ENCODE measurements at regions of chr17 and their contacts with region 1.

Region 1: GRCh38 chr17:69523244-69523861 is 108.9 kb downstream of the MAP2K6 start:
- DNase-seq: peak in 24 of 42 donors; percentile 16 to 79 (median 50)

Region 2: DNA sequence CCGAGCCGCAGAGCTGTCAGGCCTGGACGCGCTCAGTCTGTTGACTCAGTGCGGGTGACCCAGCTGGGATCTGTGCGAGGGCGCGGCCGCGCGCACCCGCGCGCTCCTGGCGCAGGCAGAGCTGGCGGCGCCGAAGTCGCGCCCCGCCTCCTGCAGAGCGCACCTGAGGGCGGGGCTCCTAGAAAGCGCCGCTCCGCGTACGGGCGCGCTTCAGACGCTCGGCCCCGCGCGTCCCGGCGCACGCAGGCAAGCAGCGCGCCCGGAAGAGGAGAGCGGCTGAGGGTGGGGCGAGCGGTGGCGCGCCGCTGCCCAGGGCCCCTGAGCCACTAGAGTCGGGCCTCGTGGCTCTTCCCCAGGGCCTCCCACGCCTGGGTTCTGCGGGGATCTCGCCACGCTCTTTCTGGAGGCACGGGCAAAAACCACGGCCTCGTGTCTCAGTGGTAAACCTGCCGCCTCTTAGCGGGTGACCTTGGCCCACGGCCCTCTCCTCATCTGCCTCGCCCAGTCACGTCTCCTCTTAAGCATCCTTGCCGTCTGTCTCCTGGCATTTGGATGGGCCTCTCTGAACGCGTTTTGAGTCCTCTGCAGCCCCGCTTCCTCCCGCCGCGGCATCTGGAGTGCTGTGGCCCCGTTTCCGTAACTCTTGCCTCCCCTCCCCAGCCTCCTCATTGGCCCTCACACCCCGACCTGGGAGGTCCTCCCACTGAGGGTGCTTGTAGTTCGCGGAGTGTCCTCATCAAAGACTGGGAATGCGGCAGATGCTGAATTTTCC is 196.1 kb before region 1 on chr17 and contains the start of gene ABCA5:
- intact Hi-C with region 1: loop called (anchors 10 kb)
- DNase-seq: peak; percentile 53 to 94 (median 85)

Region 3: GRCh38 chr17:69723742-69724141 is 200.4 kb after region 1 on chr17:
- intact Hi-C with region 1: no loop called
- DNase-seq: no peak

Measured in head of caudate nucleus (tissue), 42 donors.